ENCODE measurements at regions of chr20 and their contacts with region 1.

Region 1: GRCh38 chr20:14189794-14190402 is 147.5 kb downstream of the FLRT3 start:
- DNase-seq: no peak
- H3K4me3 ChIP-seq: no peak overlapping the region
- H3K27ac ChIP-seq: no peak overlapping the region
- H3K4me1 ChIP-seq: no peaks in the 10 kb centered on the region
- H3K27me3 ChIP-seq: no peaks in the 10 kb centered on the region
- CTCF ChIP-seq: no peak
- EP300 ChIP-seq: no peak
- POLR2A ChIP-seq: no peak

Region 2: DNA sequence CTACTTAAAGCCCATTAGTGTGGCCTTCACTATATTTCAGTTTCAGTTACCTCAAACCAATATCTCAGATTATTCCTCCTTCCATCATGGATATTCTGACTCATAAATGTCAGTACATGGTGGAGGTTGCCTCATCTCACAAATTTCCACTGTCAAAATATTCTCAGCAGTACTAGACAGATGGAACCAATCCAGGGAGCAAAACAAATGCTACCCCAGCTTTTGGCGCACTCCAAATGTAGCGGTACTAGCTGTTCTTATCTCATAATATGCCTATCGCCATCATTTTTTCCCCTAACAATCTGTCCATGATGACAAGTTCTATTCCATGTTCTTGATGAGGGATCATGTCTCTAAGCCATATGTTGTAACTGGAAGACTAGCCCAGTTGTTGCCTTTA is 1357.2 kb after region 1 on chr20:
- intact Hi-C with region 1: loop called in 1 of 4 experiments (anchors 10 kb)
- DNase-seq: no peak
- H3K4me3 ChIP-seq: no peak overlapping the region
- H3K27ac ChIP-seq: no peak overlapping the region
- H3K4me1 ChIP-seq: peaks cover 1% of the 10 kb centered on the region
- H3K27me3 ChIP-seq: no peaks in the 10 kb centered on the region
- CTCF ChIP-seq: no peak
- EP300 ChIP-seq: no peak
- POLR2A ChIP-seq: no peak